ENCODE measurements at regions of chr10 and their contacts with region 1.

Region 1: DNA sequence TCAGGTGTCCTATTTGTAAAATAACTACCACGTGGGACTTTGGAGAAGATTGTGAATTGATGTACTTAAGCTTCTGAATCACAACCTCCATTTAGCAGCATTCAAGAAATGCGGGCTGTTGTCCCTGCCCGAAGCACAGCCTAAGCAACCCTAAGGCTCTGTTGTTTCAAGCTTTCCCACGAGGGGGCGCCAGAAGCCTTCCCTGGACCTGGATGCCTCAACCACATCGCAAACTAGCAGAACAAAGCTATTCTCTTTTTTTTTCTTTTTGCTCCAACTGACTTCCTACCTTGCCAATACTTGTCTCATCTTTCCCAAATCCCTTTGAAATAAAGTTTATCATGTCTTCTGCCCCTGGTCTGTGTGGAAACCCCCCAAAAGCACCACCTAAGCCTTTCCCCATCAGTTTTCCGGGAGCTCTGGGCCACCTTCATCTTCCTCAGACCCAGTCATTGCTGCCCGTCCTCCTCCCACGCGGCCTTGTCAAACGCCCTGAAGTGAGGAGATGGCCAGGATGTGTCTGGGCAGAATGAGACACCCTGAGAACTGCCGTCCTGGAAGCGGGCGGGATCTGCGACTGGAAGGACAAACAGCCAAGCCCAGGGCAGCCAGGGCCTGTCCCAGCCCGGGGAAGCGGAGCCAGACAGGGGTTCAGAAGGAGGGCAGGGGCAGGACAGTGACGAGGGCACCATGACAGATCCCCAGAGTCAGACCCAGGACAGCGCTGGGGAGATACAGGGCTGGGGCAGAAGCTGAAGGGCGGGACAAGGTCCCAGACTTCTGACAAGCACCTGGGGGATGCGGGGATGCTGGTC is 112.7 kb downstream of the SLIT1 start:
- DNase-seq: peak; percentile 12
- H3K4me3 ChIP-seq: no peak overlapping the region
- CTCF ChIP-seq: peak; percentile 90

Region 2: DNA sequence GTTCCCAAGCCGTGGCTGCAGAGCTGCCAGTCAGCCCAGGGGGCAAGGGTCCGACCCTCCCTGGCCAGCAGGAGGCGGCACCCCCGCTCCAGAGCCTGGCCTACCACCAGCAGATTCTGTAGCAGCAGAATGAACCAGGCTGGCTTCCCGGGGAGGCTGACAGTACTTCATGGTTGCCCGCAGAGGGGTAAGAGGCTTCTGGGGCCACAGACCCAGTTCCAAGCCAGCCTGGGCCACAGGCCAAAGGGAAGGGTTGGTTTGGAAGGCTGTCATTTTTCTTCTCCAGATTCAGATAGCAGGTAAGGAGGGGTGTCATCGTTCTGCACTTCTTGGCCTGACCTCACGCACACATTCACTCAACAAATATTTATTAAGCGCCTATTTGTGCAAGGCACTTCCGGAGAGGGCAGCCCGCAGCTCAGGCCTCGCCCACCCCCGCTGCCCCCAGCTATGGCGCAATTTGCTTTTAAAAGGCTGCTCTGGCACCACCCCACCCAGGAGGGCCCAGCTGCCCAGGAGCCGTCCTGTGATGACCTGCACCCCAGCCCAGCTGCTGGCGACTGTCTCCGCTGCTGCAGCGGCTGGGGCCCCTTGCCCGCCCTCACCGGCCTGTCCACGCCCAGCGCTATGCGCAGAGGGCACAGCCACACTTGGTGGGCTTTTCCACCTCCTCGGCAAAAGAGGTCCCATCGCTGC is 72.4 kb before region 1 on chr10:
- CTCF ChIA-PET with region 1: no interaction called
- POLR2A ChIA-PET with region 1: no interaction called
- DNase-seq: no peak
- H3K4me3 ChIP-seq: no peak overlapping the region
- CTCF ChIP-seq: no peak

Region 3: DNA sequence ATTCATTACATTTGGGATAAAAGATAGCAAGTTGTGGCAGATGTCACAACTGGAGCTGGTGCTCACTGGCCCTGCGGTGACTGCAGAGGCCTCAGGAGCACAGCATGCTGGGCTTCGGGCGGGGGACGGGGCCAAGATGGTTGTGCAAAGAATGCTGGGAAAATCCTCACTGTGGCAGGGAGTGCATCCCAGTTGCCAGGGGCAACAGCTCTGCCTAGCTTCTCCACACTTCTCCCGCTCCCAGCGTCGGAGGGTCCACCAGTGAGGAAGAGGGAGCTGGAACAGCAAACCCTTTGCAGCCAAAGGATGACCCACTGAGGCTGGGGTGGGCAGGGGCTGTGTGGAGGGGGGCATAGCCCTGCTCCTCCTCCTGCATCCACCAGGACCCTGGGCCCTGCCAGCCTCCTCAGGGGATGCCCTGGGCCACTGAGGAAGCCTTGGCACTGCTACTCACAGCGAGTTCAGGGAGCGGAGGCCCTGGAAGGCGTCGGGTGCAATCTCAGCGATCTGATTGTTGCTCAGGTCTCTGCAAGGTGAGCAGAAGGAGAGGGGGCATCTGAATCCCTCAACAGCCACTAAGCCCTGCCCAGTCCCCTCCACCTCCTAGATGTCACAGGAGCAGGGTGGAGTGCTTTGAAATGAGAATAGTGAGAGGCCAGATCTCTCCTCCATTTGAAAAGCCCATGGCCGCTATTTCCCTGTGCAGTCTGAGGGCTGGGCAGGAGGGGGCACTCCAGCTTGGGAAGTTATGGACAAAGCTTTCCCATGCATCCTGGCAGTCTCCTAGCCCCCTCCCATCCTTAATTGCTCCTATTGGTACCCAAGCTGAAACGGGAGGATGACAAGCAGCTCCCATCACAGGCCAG is 13.8 kb before region 1 on chr10:
- CTCF ChIA-PET with region 1: interaction called, 51 read pairs
- POLR2A ChIA-PET with region 1: no interaction called
- DNase-seq: no peak
- H3K4me3 ChIP-seq: no peak overlapping the region
- CTCF ChIP-seq: no peak

Region 4: GRCh38 chr10:97089209-97089870 is 16.3 kb after region 1 on chr10:
- CTCF ChIA-PET with region 1: interaction called, 75 read pairs
- POLR2A ChIA-PET with region 1: no interaction called
- DNase-seq: no peak
- H3K4me3 ChIP-seq: no peak overlapping the region
- CTCF ChIP-seq: no peak

Region 5: DNA sequence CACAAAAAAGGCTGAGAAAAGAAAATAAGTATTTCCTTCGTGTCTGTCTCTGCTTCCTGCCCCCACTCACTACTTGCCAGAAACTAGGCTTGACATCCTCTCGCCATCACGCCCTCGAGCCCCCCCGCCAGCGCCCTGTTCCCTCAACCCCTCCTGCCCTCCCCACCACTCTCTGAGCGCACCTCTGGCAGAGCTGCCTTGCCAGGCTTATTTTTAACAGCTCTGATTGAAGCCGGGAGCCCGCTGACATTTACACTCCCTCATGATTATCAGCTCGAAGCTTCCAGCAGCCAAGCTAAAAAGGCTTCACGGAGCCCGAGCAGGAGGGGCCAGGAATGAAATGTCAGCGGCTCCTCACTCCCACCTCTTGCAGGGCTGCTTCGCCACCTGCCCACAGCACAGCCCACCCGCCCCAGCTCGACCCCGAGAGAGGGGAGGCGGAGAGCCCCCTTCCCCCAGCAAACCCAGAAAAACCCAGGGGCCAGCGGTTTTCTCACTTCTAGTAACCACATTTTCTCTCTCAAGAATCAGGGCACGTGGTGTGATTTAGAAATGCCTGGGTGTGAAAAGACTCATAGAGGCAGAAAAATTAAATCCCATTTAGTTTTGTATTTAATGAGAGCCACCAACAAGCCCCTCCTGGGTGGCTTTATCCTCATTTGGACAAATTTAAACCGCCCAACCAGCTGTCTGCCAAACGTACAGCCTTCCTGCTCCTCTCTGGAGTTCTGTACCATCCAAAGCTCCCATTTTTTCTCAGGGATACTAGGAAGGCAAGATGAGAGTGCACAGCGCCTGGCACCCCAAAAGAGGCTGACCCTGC is 23.4 kb after region 1 on chr10:
- CTCF ChIA-PET with region 1: interaction called, 28 read pairs
- POLR2A ChIA-PET with region 1: no interaction called
- DNase-seq: no peak
- H3K4me3 ChIP-seq: no peak overlapping the region
- CTCF ChIP-seq: no peak

Region 6: GRCh38 chr10:97196223-97197029 is 123.4 kb after region 1 on chr10:
- CTCF ChIA-PET with region 1: interaction called, 29 read pairs
- POLR2A ChIA-PET with region 1: no interaction called
- DNase-seq: no peak
- H3K4me3 ChIP-seq: peak overlapping the region; percentile 56
- CTCF ChIP-seq: peak; percentile 69

Region 7: GRCh38 chr10:97210543-97210961 is 137.5 kb after region 1 on chr10:
- CTCF ChIA-PET with region 1: interaction called, 1,063 read pairs
- POLR2A ChIA-PET with region 1: no interaction called
- DNase-seq: no peak
- H3K4me3 ChIP-seq: no peak overlapping the region
- CTCF ChIP-seq: peak; percentile 91

Region 8: DNA sequence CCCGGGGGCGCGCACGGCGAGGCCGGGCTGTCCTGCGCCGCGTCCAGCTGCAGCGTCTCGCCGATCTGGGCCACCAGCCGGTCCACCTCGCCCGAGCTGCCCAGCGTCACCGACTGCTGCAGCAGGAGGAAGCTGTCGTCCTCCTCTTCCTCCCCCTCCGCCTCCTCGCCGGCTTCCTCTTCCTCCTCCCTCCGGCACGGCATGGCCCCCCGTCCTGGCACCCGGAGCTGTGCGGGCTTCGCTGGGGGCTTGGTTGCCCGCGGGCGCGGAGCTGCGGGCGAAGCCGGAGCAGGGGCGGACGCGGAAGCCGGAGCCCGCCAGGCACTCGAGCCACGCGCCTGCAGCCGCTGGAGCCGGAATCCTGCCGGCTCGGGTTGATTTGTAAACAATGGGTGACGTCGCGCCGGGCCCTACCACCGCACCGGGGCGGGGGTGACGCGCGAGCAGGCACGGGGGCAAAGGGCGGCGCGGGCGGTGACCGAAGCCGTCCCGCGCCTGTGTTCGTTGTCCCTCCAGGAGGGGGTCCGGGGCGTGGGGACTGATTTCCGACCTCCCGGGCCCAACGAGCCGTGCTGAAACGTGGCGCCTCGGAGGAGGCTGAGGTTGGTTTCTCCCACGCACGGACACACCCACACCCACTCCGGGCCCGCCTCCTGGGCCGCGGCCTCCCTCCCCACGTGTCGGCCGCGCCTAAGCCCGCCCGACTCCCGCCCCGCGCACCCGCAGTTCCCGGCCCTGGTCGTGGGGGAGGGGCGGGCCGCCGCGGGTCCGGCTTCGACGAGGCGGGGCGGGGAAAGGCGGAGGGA is 261.5 kb after region 1 on chr10 and contains the start of gene FRAT2:
- CTCF ChIA-PET with region 1: interaction called, 10 read pairs
- POLR2A ChIA-PET with region 1: no interaction called
- DNase-seq: no peak
- H3K4me3 ChIP-seq: peak within 1 kb of the TSS; percentile 75
- CTCF ChIP-seq: no peak

Measured in AG04449 (cell line).